PC-3 (cell line): ENCODE measurements at regions of chr11 and their contacts with region 1.

Region 1: DNA sequence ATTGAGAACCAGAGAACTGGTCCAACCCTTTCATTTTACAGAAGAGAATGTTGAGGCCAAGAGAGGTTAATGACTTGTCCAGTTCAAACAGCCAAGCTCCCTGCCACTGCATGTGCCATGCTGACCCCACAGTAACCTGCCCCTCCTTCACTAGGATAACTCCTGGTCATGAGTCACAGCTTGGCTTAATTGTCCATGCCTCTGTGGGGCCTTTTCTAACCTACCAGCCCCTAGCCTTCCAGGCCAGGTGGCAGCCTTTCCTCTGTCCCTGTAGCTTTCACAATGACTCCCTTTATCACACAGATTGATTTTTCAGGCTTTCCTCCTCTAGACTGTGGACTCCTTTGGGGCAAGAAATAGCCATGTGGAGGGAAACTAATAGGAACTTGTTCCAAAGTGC is 97.2 kb downstream of the PIWIL4 start:
- DNase-seq: peak; percentile 47
- ATAC-seq: peak; percentile 19
- H3K4me3 ChIP-seq: no peak overlapping the region
- H3K27ac ChIP-seq: no peak overlapping the region
- H3K4me1 ChIP-seq: peaks cover 33% of the 10 kb centered on the region
- H3K27me3 ChIP-seq: no peaks in the 10 kb centered on the region
- CTCF ChIP-seq: no peak

Region 2: GRCh38 chr11:94650756-94651155 is 13.6 kb before region 1 on chr11:
- CTCF ChIA-PET with region 1: no interaction called
- POLR2A ChIA-PET with region 1: no interaction called
- intact Hi-C with region 1: no loop called
- DNase-seq: no peak
- ATAC-seq: no peak
- H3K4me3 ChIP-seq: no peak overlapping the region
- H3K27ac ChIP-seq: no peak overlapping the region
- H3K4me1 ChIP-seq: no peaks in the 10 kb centered on the region
- H3K27me3 ChIP-seq: no peaks in the 10 kb centered on the region
- CTCF ChIP-seq: no peak

Region 3: GRCh38 chr11:94678236-94678635 is 13.9 kb after region 1 on chr11:
- CTCF ChIA-PET with region 1: no interaction called
- POLR2A ChIA-PET with region 1: no interaction called
- intact Hi-C with region 1: no loop called
- DNase-seq: peak; percentile 97
- ATAC-seq: peak; percentile 67
- H3K4me3 ChIP-seq: peak overlapping the region; percentile 10; the same call in 1 of the 2 replicates
- H3K27ac ChIP-seq: peak overlapping the region; percentile 86
- H3K4me1 ChIP-seq: peaks cover 64% of the 10 kb centered on the region
- H3K27me3 ChIP-seq: no peaks in the 10 kb centered on the region
- CTCF ChIP-seq: no peak

Region 4: DNA sequence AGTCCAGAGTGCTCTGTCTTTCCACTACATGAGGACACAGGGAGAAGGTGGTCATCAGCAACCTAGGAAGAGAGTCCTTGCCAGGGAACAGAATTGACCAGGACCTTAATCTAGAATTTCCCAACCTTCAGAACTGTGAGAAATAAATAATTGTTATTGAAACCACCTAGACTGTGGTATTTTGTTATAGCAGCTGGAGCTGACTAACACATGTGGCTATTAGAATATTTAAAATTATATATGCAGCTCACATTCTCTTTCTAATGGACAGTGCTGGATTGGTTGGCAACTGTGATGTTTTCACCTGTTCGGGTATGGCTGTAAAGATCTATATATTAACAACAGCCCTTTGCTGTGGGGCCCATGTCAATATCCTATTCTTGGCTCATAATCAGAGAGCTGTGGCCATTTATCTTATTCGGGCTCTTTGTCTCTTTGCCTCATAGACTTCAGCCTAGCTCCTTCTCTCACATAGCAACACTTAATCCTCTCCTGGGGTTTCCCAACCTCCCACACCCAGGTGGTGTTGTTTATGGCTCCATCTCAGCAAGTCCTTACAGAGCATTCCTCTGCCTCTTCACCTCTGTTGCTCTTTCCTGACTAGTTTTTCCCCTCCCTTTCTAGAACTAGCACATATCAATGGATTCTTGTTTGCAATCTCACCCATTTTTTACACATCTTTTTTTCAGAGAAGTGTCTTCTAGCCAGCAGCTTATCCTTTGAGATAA is 57.4 kb after region 1 on chr11:
- CTCF ChIA-PET with region 1: no interaction called
- POLR2A ChIA-PET with region 1: no interaction called
- intact Hi-C with region 1: loop called (anchors 2 kb)
- DNase-seq: no peak
- ATAC-seq: no peak
- H3K4me3 ChIP-seq: no peak overlapping the region
- H3K27ac ChIP-seq: no peak overlapping the region; the same call in 1 of the 2 replicates
- H3K4me1 ChIP-seq: peaks cover 19% of the 10 kb centered on the region
- H3K27me3 ChIP-seq: no peaks in the 10 kb centered on the region
- CTCF ChIP-seq: no peak

Region 5: GRCh38 chr11:94747146-94748080 is 83.1 kb after region 1 on chr11:
- CTCF ChIA-PET with region 1: interaction called, 3 read pairs
- POLR2A ChIA-PET with region 1: no interaction called
- intact Hi-C with region 1: loop called (anchors 5 kb)
- DNase-seq: peak; percentile 99
- ATAC-seq: peak; percentile 44
- H3K4me3 ChIP-seq: no peak overlapping the region
- H3K27ac ChIP-seq: peak overlapping the region; percentile 94
- H3K4me1 ChIP-seq: peaks cover 71% of the 10 kb centered on the region
- H3K27me3 ChIP-seq: no peaks in the 10 kb centered on the region
- CTCF ChIP-seq: no peak